Dendritic cell treated with granulocyte-macrophage colony-stimulating factor and Interleukin-4, amounts not matched to agents 40 ng/mL and 50 ng/mL, for 4 days (primary cell): ENCODE measurements at regions of chr4 and their contacts with region 1.

Region 1: DNA sequence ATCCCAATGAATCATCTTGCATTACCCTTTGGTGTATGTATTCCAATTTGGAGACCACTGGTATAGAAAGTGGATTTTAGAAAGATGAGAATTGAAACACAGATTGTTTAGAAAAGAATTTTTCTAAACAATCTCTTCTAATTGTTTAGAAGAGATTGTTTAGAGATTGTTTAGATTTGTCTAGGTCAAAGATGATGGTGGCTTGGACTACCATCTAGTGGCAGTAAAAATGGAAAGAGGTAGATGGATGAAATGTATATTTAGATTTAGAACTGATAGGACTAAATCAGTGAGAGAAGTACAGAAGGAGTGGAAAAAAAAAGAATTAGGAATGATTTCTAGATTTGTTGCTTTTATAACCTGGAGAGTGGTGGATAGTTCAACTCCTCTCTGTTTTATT is 70.6 kb downstream of the ARSJ start:
- H3K4me3 Mint-ChIP-seq: no peak overlapping the region
- H3K27ac Mint-ChIP-seq: no peak overlapping the region
- H3K4me1 Mint-ChIP-seq: no peaks in the 10 kb centered on the region
- H3K27me3 Mint-ChIP-seq: peaks cover 3% of the 10 kb centered on the region

Region 2: DNA sequence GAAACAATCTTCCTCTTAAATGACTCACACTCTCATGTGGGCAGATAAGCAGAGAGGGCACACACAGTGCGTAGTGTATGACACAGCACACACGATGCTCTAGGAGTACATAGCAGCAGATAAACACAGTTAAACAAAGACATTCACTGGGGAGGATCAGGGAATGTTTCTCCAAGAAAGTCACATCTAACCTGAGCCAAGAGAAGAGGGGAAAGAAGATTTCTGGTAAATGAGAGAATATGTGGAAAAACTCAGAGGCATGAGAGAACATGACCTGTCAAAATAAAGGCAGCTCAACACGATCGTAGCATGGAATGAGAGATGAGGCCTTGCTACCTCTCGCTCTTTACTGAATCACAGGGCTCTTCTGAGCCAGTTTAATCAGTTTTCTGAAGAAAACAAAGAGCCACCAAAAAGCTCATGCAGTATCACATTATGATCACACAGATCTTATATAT is 608.3 kb before region 1 on chr4:
- intact Hi-C with region 1: no loop called
- H3K4me3 Mint-ChIP-seq: no peak overlapping the region
- H3K27ac Mint-ChIP-seq: no peak overlapping the region
- H3K4me1 Mint-ChIP-seq: no peaks in the 10 kb centered on the region
- H3K27me3 Mint-ChIP-seq: no peaks in the 10 kb centered on the region

Region 3: GRCh38 chr4:113547487-113548042 is 361.3 kb before region 1 on chr4:
- intact Hi-C with region 1: loop called (anchors 1 kb)
- H3K4me3 Mint-ChIP-seq: no peak overlapping the region
- H3K27ac Mint-ChIP-seq: no peak overlapping the region
- H3K4me1 Mint-ChIP-seq: no peaks in the 10 kb centered on the region
- H3K27me3 Mint-ChIP-seq: no peaks in the 10 kb centered on the region

Region 4: GRCh38 chr4:113979148-113979904 is 70.5 kb after region 1 on chr4 and contains the start of gene ARSJ:
- intact Hi-C with region 1: no loop called
- H3K4me3 Mint-ChIP-seq: peak within 1 kb of the TSS; percentile 51
- H3K27ac Mint-ChIP-seq: no peak within 1 kb of the TSS
- H3K4me1 Mint-ChIP-seq: peaks cover 15% of the 10 kb centered on the region
- H3K27me3 Mint-ChIP-seq: peaks cover 53% of the 10 kb centered on the region